HCT116 (cell line): ENCODE measurements at regions of chr17 and their contacts with region 1.

Region 1: DNA sequence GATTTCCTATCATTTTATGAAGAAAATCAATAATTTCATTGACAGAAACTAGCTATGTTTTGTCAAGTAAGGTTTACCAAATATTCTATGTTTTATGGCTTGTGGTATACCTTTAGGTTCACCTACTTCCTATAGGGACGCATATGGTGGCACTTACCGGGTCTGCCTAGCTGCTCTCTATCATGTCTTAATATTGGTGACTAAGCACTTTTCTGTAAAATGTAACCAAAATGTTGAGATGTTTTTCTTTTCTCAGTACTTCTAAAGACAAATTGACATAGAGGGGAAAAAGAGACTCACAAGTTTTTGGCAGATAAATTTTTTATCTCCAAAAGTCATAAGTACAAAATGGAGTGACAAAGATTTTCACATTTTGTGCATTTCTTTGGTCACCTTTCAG is 22.6 kb upstream of the MYH4 start:
- DNase-seq: no peak
- ATAC-seq: no peak
- H3K4me3 ChIP-seq: no peak overlapping the region
- H3K27ac ChIP-seq: no peak overlapping the region
- H3K4me1 ChIP-seq: no peaks in the 10 kb centered on the region
- H3K27me3 ChIP-seq: 0 out of 2 replicates have a peak, but pooled peaks cover 4% of the 10 kb centered on the region
- CTCF ChIP-seq: no peak
- POLR2A ChIP-seq: no peak
- RAD21 ChIP-seq: no peak

Region 2: GRCh38 chr17:10477701-10478100 is 14.3 kb before region 1 on chr17:
- CTCF ChIA-PET with region 1: no interaction called
- POLR2A ChIA-PET with region 1: no interaction called
- RAD21 ChIA-PET with region 1: no interaction called
- intact Hi-C with region 1: no loop called
- DNase-seq: no peak
- ATAC-seq: no peak
- H3K4me3 ChIP-seq: no peak overlapping the region
- H3K27ac ChIP-seq: no peak overlapping the region
- H3K4me1 ChIP-seq: no peaks in the 10 kb centered on the region
- H3K27me3 ChIP-seq: peaks cover 35% of the 10 kb centered on the region; the same call in 1 of the 2 replicates
- CTCF ChIP-seq: no peak
- POLR2A ChIP-seq: no peak
- RAD21 ChIP-seq: no peak

Region 3: DNA sequence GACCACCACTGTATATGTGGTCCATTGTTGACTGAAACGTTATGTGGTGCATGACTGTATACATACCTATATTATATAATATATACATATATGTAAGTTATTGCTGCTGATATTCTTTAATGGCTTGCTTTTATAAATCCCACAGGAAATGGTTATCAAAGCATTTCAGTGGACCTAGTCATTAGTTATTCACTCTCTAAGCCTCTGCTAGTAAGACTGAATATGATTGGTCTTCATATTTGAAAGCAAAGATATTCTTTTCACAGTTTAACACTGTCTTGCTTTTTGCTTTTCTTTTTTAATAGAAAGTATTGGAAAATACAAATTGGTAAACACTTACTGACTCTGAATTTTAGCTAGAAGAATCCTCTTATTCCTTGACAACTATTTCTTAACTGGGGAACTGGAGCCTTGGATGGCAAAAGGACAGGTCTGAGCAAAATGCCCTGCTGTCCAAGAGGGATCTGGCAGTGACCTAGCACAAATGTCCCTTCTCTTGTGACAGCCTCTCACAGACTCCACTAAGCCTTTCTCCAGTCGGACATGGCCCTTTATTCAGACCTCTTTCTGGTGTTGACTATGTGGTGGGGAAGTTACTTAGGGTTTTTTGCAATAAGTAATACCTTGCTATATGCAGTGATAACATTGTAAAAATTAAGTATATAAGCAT is 72.1 kb after region 1 on chr17:
- CTCF ChIA-PET with region 1: no interaction called
- POLR2A ChIA-PET with region 1: no interaction called
- RAD21 ChIA-PET with region 1: no interaction called
- intact Hi-C with region 1: loop called (anchors 2 kb)
- DNase-seq: no peak
- ATAC-seq: no peak
- H3K4me3 ChIP-seq: no peak overlapping the region
- H3K27ac ChIP-seq: no peak overlapping the region
- H3K4me1 ChIP-seq: no peaks in the 10 kb centered on the region
- H3K27me3 ChIP-seq: peaks cover 17% of the 10 kb centered on the region
- CTCF ChIP-seq: no peak
- POLR2A ChIP-seq: no peak
- RAD21 ChIP-seq: no peak